Caco-2 (cell line): ENCODE measurements at regions of chr5 and their contacts with region 1.

Region 1: DNA sequence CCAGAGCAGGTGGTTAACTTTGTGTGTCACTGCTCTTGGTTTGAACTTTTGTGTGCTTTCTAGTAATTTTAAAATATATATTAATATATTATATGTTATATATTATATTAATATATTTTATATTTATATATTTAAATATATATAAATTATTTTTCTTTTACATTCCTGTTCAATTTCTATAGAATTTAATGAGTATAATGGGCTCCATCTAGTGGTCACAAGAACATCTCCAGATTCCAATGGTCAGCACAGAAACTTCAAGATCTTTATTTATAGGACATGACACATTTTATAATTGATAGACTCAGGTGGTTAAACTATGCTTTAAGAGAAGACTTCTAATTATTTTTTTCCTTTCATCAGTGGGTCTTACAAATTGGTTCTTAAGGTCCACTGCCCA is 39.1 kb downstream of the COL23A1 start:
- DNase-seq: no peak
- H3K4me3 ChIP-seq: no peak overlapping the region
- H3K4me3 Mint-ChIP-seq: no peak overlapping the region
- H3K27ac Mint-ChIP-seq: no peak overlapping the region
- H3K4me1 ChIP-seq: no peaks in the 10 kb centered on the region
- H3K4me1 Mint-ChIP-seq: no peaks in the 10 kb centered on the region
- H3K27me3 ChIP-seq: no peaks in the 10 kb centered on the region
- H3K27me3 Mint-ChIP-seq: peaks cover 15% of the 10 kb centered on the region
- CTCF ChIP-seq: peak in 1 of 2 experiments; percentile 43

Region 2: DNA sequence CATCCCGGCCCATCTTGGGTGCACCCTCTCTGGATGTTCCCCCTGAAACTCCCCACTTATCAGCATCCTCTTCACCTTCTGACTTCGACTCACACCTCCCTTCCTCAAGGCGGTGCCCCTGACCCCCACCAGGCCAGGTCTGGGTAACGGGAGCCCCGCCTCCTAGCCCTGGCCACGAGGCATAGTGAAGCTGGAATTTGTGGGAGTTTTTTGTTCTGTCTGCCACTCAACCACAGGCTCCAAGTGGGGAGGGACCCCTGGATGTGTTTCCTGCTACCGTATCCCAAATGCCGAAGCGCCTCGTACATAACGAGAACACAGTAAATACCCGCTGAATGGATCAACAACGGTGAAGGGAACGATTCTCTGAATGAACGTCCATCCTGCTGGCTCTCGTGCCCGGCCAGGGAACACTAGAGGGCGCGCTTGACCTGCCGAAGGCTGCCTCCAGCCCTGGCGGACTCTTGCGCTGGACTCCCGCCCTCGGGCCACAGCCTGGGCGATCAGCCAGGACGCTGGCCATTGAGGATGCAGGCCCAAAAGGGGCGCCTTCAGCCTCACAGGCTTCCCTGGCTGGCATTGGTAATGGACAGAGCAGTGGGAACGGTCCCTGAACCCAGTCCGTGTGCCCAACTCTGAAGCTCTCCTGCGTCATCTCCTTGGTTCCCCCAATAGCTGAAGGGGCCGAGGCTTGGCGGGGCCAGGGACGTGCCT is 271.2 kb before region 1 on chr5:
- CTCF ChIA-PET with region 1: interaction called, 3 read pairs
- POLR2A ChIA-PET with region 1: no interaction called
- intact Hi-C with region 1: loop called (anchors 1 kb)
- DNase-seq: peak; percentile 80 to 89
- H3K4me3 ChIP-seq: no peak overlapping the region
- H3K4me3 Mint-ChIP-seq: no peak overlapping the region
- H3K27ac Mint-ChIP-seq: no peak overlapping the region
- H3K4me1 ChIP-seq: peaks cover 4% of the 10 kb centered on the region; the same call in 1 of the 2 replicates
- H3K4me1 Mint-ChIP-seq: no peaks in the 10 kb centered on the region
- H3K27me3 ChIP-seq: no peaks in the 10 kb centered on the region
- H3K27me3 Mint-ChIP-seq: peaks cover 6% of the 10 kb centered on the region
- CTCF ChIP-seq: peak; percentile 93 to 96

Region 3: DNA sequence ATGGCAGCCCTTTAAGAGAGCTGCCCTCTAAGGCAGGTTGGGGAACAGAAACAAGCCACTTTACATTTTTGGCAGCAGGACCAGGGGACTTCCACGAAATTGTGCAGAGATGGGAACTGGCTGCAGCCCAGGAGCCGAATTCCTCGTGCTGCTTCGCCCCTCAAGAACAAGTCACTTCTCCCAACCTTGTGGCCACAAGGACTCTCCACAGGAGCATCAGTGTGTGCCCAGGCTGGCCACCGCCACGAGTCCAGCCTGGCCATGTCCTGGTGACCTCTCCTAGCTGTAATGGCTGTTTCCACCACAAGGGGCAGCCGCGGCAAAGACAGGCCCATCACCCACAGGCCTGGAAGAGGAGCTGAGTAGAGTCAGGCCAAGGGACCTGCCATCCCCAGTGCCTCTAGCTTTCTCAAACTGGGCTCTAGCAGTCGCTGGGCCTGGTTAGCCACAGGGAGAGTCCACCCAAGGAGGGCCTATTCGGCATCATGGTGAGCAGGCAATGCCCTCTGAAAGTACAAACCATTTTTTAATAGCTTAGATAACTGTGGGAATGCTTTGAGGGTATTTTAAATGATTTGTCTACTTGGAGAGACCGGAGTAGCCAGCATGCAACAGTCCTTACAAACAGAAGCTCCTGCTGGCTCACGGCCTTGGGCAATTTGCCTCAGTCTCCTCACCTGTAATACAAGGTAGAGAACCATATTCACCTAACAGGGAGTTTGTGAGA is 89.9 kb before region 1 on chr5:
- CTCF ChIA-PET with region 1: interaction called, 4 read pairs
- POLR2A ChIA-PET with region 1: no interaction called
- intact Hi-C with region 1: loop called (anchors 1 kb)
- DNase-seq: peak; percentile 71 to 83
- H3K4me3 ChIP-seq: no peak overlapping the region
- H3K4me3 Mint-ChIP-seq: no peak overlapping the region
- H3K27ac Mint-ChIP-seq: no peak overlapping the region
- H3K4me1 ChIP-seq: peaks cover 7% of the 10 kb centered on the region; the same call in 1 of the 2 replicates
- H3K4me1 Mint-ChIP-seq: peaks cover 7% of the 10 kb centered on the region
- H3K27me3 ChIP-seq: no peaks in the 10 kb centered on the region
- H3K27me3 Mint-ChIP-seq: no peaks in the 10 kb centered on the region
- CTCF ChIP-seq: peak; percentile 83 to 87

Region 4: GRCh38 chr5:178602752-178603151 is 51.7 kb after region 1 on chr5:
- CTCF ChIA-PET with region 1: no interaction called
- POLR2A ChIA-PET with region 1: no interaction called
- intact Hi-C with region 1: no loop called
- DNase-seq: no peak
- H3K4me3 ChIP-seq: no peak overlapping the region
- H3K4me3 Mint-ChIP-seq: no peak overlapping the region
- H3K27ac Mint-ChIP-seq: no peak overlapping the region
- H3K4me1 ChIP-seq: no peaks in the 10 kb centered on the region
- H3K4me1 Mint-ChIP-seq: no peaks in the 10 kb centered on the region
- H3K27me3 ChIP-seq: no peaks in the 10 kb centered on the region
- H3K27me3 Mint-ChIP-seq: no peaks in the 10 kb centered on the region
- CTCF ChIP-seq: no peak